ENCODE measurements at regions of chr20 and their contacts with region 1.

Region 1: DNA sequence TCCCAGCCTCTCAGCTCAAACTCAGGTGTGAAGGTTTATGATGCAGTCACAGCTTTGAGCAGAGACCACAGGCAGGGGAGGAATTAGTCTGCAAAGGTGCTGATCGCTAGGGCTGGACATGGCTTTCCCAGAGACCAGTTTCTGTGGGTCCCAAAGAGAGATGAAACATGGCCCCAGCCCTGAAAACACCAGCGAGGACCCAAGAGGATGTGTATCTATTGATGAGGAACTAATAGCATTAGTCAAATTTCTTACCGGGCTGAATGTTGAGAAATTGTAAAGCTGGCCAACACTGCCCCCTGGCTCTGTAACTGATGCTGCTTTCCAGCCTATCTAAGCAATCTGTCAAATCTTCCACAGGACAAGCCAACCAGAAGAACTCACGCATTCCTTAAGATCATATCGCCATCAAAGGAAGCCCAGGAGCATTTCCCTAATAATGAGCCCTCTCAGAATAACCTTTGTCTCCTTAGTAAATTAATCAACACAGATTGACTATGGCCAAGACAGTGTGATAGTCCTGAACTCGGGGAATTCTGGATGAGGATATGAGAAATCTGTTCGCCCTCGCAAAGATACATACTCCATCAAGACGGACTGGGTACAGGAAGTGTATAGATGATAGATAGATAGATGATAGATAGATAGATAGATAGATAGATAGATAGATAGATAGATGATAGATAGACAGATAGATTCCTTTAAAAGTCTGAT is 7.8 kb upstream of the ACSS1 start:
- DNase-seq: peak; percentile 37 to 60
- ATAC-seq: peak; percentile 53 to 92 (median 79)
- H3K4me3 ChIP-seq: no peak overlapping the region
- H3K27ac ChIP-seq: peak overlapping the region in 1 of 10 donors; percentile 1
- H3K4me1 ChIP-seq: peaks cover 0 to 20% (median 11%) of the 10 kb centered on the region in 9 donors
- H3K27me3 ChIP-seq: peaks cover 0 to 36% (median 10%) of the 10 kb centered on the region in 7 donors
- CTCF ChIP-seq: peak; percentile 69 to 94 (median 81)

Region 2: DNA sequence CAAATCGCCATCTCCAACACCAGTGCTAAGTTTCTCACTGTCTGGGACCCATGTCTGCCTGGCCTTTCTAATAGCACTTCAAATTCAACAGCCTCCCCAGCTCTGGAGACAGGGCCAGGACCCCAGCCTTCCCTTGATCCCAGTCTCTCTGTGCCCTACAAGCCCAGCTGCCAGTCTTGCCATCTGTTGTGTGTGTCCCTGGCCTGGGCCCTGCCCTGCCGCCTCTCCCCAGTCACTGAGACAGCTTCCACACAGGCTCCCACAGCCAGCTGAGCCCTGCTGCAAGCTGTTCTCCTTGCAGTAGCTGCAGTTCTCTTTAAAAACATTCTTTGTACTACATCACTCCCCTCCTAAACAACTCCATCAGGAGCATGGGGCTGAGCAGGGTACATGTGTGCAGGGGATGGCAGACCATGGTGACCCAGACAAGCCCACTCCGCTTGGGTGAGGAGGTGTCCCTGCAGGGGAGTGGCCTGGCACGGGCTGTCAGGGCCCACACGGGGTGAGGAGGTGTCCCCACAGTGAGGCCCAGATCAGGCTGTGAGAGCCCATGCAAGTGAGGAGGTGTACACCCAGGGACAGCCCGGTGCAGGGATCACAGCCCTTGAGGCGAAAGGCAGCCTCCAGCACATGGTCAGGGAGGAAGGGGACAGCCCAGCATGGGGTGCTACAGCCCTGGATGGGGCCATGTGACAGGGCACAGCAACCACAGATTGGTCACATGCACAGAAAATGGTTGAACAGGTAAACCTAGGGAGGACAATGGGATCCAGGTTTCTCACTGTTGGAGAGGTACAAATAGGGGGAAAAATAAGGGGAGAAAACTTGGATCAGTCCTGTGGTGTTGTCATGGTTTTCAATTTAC is 100.5 kb before region 1 on chr20:
- intact Hi-C with region 1: no loop called
- DNase-seq: no peak
- ATAC-seq: no peak
- H3K4me3 ChIP-seq: no peak overlapping the region
- H3K27ac ChIP-seq: peak overlapping the region in 1 of 10 donors; percentile 18
- H3K4me1 ChIP-seq: no peaks in the 10 kb centered on the region
- H3K27me3 ChIP-seq: no peaks in the 10 kb centered on the region
- CTCF ChIP-seq: no peak

Region 3: GRCh38 chr20:25032478-25033280 is 33.1 kb before region 1 on chr20:
- intact Hi-C with region 1: loop called in 2 of 10 experiments (anchors 5 kb)
- DNase-seq: peak; percentile 65 to 72
- ATAC-seq: peak; percentile 66 to 88 (median 80)
- H3K4me3 ChIP-seq: peak overlapping the region in 4 of 10 donors; percentile 1 to 32 (median 16)
- H3K27ac ChIP-seq: peak overlapping the region; percentile 45 to 98 (median 78)
- H3K4me1 ChIP-seq: peaks cover 43 to 82% (median 56%) of the 10 kb centered on the region in 9 donors
- H3K27me3 ChIP-seq: no peaks in the 10 kb centered on the region
- CTCF ChIP-seq: peak in 3 of 9 donors; percentile 37 to 50 (median 39)

Region 4: DNA sequence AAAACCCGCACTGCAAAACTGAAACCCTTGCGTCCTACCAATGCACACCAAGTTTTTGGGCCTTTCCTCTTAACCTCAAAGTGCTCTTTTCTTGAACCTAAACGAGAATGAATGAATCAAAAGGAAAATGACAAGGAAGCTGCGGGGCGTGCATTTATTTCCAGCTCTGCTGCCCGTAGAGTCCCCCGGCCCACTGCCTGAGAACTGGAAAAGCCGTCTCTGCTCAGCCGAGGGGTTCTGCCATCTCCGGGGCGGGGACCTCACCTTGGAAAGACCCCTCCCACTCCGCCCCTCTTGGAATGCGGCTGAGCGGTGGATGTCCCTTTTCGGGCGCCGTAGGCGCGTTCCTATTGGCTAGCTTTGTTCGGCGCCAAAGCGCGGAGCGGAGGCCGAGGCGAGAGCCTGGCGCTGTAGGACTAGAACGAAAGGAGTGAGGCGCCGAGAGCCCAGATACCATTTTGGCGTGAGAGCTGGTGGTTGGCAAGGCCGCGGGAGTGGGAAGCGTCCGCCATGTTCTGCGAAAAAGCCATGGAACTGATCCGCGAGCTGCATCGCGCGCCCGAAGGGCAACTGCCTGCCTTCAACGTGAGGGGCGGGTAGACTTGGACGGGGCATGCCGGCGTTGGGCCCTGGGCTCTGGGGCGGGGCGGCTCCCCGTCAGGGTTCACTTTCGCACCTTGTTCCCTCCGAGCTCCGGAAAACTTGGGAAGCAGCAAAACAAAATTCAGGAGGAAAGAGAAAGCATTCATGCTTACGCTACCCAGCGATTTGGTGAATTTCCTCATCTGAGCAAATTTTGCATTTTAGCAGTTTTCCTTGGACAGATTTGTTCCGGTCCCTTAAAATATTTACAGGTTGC is 341.8 kb after region 1 on chr20 and contains the start of gene GINS1:
- intact Hi-C with region 1: loop called in 2 of 10 experiments (anchors 10 kb)
- DNase-seq: peak; percentile 83
- ATAC-seq: peak; percentile 93 to 97 (median 96)
- H3K4me3 ChIP-seq: peak within 1 kb of the TSS; percentile 30 to 84 (median 64)
- H3K27ac ChIP-seq: peak within 1 kb of the TSS in 4 of 10 donors; percentile 24 to 61 (median 38)
- H3K4me1 ChIP-seq: peaks cover 0 to 22% (median 9%) of the 10 kb centered on the region in 9 donors
- H3K27me3 ChIP-seq: no peaks in the 10 kb centered on the region
- CTCF ChIP-seq: no peak
- total RNA-seq, gene GINS1: 0.19 to 1.6 (median 0.64) TPM

Region 5: DNA sequence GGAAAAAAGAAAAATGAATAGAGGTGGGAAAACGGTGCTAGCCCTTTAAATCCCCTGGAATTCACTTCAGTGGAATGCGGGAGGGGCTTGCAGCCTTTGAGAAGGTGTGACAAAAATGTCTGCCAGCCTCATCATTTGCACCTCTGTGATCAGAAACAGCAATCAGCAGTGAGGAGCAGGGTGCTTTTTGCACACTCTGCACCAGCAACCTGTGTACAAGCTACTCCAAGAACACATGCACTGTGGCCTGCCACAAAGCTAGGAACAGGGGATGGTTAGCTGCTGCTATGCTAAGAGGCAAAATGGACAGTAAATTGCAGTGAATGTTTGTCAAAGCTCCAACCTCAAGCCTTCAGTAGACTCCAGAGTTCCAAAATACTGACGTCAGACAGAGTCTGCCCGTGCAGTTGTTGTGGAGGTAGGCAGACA is 371.4 kb after region 1 on chr20:
- intact Hi-C with region 1: no loop called
- DNase-seq: no peak
- ATAC-seq: peak in 3 of 8 donors; percentile 22 to 33 (median 31)
- H3K4me3 ChIP-seq: no peak overlapping the region
- H3K27ac ChIP-seq: peak overlapping the region in 1 of 10 donors; percentile 12
- H3K4me1 ChIP-seq: peaks cover 0 to 12% (median 3%) of the 10 kb centered on the region in 9 donors
- H3K27me3 ChIP-seq: no peaks in the 10 kb centered on the region
- CTCF ChIP-seq: no peak